ENCODE measurements at regions of chr1 and their contacts with region 1.

Region 1: GRCh38 chr1:200302192-200302920 is 107.5 kb downstream of the ZNF281 start:
- DNase-seq: peak; percentile 67
- H3K4me3 Mint-ChIP-seq: peak overlapping the region; percentile 76
- H3K27ac Mint-ChIP-seq: no peak overlapping the region
- H3K4me1 Mint-ChIP-seq: peaks cover 14% of the 10 kb centered on the region
- H3K27me3 Mint-ChIP-seq: peaks cover 5% of the 10 kb centered on the region

Region 2: DNA sequence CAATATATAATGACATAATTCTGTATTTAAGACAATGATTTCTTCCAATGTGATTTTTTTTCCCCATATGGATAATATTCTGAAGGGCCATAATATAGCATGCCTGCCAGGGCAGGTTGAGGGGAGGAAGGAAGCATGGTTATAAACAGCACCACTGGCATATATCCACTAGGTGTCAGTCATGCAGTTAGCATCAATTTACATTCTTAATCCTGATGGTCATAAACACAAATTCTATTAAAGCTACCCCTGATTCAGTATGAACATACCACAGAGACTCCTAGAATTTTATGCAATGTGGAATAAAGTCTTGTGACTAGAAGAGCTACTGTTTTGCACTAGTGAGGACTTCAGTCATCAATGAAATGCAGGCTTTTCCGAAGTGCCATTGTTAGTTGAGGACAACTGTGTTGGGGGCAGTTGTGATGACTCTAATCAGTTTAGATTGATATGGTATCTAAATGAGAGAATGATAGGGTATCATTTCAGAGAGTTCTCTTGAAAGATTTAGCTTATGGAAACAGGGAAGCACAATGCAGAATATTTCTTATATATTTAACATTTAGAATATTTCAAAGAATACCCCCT is 617.6 kb before region 1 on chr1:
- CTCF ChIA-PET with region 1: interaction called, 3 read pairs
- POLR2A ChIA-PET with region 1: no interaction called
- intact Hi-C with region 1: loop called (anchors 10 kb)
- DNase-seq: peak; percentile 13
- H3K4me3 Mint-ChIP-seq: no peak overlapping the region
- H3K27ac Mint-ChIP-seq: no peak overlapping the region
- H3K4me1 Mint-ChIP-seq: no peaks in the 10 kb centered on the region
- H3K27me3 Mint-ChIP-seq: peaks cover 1% of the 10 kb centered on the region

Region 3: GRCh38 chr1:200038981-200039848 is 263.1 kb before region 1 on chr1:
- CTCF ChIA-PET with region 1: no interaction called
- POLR2A ChIA-PET with region 1: no interaction called
- intact Hi-C with region 1: no loop called
- DNase-seq: peak; percentile 41
- H3K4me3 Mint-ChIP-seq: peak overlapping the region; percentile 64
- H3K27ac Mint-ChIP-seq: no peak overlapping the region
- H3K4me1 Mint-ChIP-seq: peaks cover 40% of the 10 kb centered on the region
- H3K27me3 Mint-ChIP-seq: peaks cover 61% of the 10 kb centered on the region

Region 4: DNA sequence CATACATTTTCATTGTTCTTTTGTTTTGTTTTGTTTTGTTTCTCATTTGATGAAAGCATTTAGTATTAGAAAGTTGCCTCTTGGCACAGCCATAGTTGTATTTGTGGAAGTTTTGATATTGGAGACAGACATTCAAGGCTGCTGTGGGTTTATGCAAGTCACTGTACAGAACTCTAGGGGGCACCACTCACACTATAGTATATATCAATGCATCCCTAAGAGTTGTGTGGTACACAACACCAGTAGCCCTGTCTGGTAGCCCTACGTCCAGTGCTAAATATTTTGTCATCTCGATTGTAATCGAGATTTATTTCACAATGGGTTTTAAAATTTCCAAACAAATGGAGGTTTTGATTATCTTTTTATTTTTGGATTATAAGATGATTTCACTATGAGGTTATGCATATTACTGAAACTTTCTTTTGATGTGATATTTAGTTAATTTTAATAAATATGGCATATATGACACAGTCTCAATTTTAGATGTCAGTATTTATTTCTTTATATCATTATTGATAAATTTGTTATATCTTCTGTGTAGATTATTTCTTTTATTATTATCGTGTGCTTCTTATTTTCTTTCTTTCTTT is 162.6 kb before region 1 on chr1:
- CTCF ChIA-PET with region 1: interaction called, 8 read pairs
- POLR2A ChIA-PET with region 1: no interaction called
- intact Hi-C with region 1: loop called (anchors 1 kb)
- DNase-seq: peak; percentile 27
- H3K4me3 Mint-ChIP-seq: no peak overlapping the region
- H3K27ac Mint-ChIP-seq: no peak overlapping the region
- H3K4me1 Mint-ChIP-seq: no peaks in the 10 kb centered on the region
- H3K27me3 Mint-ChIP-seq: no peaks in the 10 kb centered on the region

Region 5: GRCh38 chr1:200242110-200243041 is 60.0 kb before region 1 on chr1:
- CTCF ChIA-PET with region 1: no interaction called
- POLR2A ChIA-PET with region 1: no interaction called
- intact Hi-C with region 1: no loop called
- DNase-seq: no peak
- H3K4me3 Mint-ChIP-seq: no peak overlapping the region
- H3K27ac Mint-ChIP-seq: no peak overlapping the region
- H3K4me1 Mint-ChIP-seq: peaks cover 2% of the 10 kb centered on the region
- H3K27me3 Mint-ChIP-seq: peaks cover 16% of the 10 kb centered on the region

Region 6: DNA sequence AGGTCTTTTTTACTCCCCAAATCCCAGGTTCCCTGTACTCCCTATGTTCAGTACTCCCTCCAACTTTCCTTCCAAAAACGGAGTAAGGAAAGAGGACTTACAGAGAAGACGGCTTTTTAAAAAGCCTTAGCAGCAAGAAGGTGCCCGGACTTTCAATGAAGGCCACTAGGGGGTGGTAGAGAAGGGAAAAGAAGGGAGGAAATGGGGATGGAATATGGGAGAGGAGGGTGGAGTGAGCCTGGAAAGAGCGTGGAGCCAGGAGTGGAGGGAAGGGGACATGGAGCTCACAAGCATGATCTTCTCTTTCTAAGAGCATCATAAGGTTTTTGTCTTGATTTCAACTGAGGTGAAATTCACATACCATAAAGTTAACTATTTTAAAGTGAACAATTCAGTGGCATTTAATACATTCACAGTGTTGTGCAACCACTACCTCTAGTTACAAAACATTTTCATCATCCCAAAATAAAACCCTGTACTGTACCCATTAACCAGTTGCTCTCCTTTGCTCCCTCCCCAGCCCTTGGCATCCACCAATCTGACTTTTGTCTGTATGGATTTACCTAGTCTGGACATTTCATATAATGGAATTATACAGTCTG is 22.4 kb before region 1 on chr1:
- CTCF ChIA-PET with region 1: interaction called, 9 read pairs
- POLR2A ChIA-PET with region 1: no interaction called
- intact Hi-C with region 1: loop called (anchors 2 kb)
- DNase-seq: peak; percentile 40
- H3K4me3 Mint-ChIP-seq: no peak overlapping the region
- H3K27ac Mint-ChIP-seq: no peak overlapping the region
- H3K4me1 Mint-ChIP-seq: no peaks in the 10 kb centered on the region
- H3K27me3 Mint-ChIP-seq: no peaks in the 10 kb centered on the region

Region 7: DNA sequence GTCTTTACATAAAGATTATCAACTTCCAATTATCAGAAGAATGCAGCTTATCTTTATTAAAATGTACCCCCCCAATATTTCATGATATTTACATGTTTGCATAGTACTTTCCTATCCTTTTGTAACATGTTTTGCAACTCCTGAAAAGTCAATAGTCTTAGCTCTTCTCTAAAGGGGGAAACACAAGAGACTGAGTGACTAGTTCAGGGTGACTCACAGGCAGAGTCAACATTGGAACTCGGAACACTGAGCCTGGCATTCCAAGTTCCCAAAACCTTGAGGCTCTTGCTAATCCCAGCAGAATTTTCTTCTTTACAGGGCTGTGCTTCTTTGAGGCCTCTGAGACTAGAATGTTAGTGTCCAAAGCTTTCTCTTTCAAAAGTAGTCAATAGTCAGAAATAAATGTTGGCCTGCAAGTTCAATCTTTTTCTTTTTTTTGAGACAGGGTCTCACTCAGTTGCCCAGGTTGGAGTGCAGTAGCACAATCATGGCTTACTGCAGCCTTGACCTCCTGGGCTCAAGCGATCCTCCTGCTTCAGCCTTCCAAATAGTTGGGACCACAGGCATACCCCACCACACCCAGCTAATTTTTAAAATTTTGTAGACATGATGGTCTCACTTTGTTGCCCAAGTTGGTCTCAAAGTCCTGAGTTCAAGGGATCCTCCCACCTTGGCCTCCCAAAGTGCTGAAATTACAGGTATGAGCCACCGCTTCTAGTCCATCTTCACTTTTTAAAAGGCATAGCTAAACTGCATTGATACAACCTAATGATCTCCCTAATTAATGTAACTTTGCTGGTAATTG is 69.9 kb after region 1 on chr1:
- CTCF ChIA-PET with region 1: no interaction called
- POLR2A ChIA-PET with region 1: no interaction called
- intact Hi-C with region 1: no loop called
- DNase-seq: no peak
- H3K4me3 Mint-ChIP-seq: no peak overlapping the region
- H3K27ac Mint-ChIP-seq: no peak overlapping the region
- H3K4me1 Mint-ChIP-seq: no peaks in the 10 kb centered on the region
- H3K27me3 Mint-ChIP-seq: no peaks in the 10 kb centered on the region

Region 8: DNA sequence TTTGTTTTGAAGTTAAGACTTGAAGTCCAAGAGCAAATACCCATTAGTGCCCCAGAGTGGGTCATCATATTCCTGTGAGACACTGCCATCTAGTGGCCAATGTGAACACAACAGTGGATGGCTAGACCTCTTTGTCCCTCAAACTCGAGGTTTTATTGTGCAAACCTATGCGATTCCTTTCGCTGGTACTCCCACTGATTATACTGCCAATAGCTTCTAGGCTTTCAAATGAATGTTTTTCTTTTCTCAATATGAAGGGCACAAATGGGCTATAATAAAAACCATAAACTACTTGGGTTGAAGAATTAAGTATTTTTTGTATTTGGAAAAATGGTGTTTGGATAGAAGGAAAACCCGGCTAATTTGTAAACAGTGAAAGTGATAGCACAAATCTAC is 207.9 kb after region 1 on chr1:
- CTCF ChIA-PET with region 1: interaction called, 4 read pairs
- POLR2A ChIA-PET with region 1: no interaction called
- intact Hi-C with region 1: loop called (anchors 10 kb)
- DNase-seq: peak; percentile 75
- H3K4me3 Mint-ChIP-seq: no peak overlapping the region
- H3K27ac Mint-ChIP-seq: no peak overlapping the region
- H3K4me1 Mint-ChIP-seq: peaks cover 2% of the 10 kb centered on the region
- H3K27me3 Mint-ChIP-seq: peaks cover 5% of the 10 kb centered on the region

Region 9: GRCh38 chr1:200684015-200684414 is 381.7 kb after region 1 on chr1:
- CTCF ChIA-PET with region 1: no interaction called
- POLR2A ChIA-PET with region 1: no interaction called
- intact Hi-C with region 1: no loop called
- DNase-seq: no peak
- H3K4me3 Mint-ChIP-seq: no peak overlapping the region
- H3K27ac Mint-ChIP-seq: no peak overlapping the region
- H3K4me1 Mint-ChIP-seq: no peaks in the 10 kb centered on the region
- H3K27me3 Mint-ChIP-seq: no peaks in the 10 kb centered on the region